Panc1 (cell line): ENCODE measurements at regions of chr17 and their contacts with region 1.

Region 1: GRCh38 chr17:78258323-78259191 is 27.1 kb downstream of the TMEM235 start:
- DNase-seq: no peak
- ATAC-seq: no peak; the same call in 1 of the 2 replicates
- H3K4me3 ChIP-seq: no peak overlapping the region
- H3K27ac ChIP-seq: peak overlapping the region; percentile 64
- H3K4me1 ChIP-seq: peaks cover 37% of the 10 kb centered on the region
- H3K27me3 ChIP-seq: no peaks in the 10 kb centered on the region
- CTCF ChIP-seq: no peak

Region 2: GRCh38 chr17:78154903-78155811 is 103.4 kb before region 1 on chr17:
- CTCF ChIA-PET with region 1: no interaction called
- POLR2A ChIA-PET with region 1: interaction called, 15 read pairs
- in situ Hi-C with region 1: no loop called
- intact Hi-C with region 1: no loop called
- DNase-seq: no peak
- ATAC-seq: no peak
- H3K4me3 ChIP-seq: no peak overlapping the region
- H3K27ac ChIP-seq: no peak overlapping the region
- H3K4me1 ChIP-seq: no peaks in the 10 kb centered on the region
- H3K27me3 ChIP-seq: no peaks in the 10 kb centered on the region
- CTCF ChIP-seq: no peak

Region 3: DNA sequence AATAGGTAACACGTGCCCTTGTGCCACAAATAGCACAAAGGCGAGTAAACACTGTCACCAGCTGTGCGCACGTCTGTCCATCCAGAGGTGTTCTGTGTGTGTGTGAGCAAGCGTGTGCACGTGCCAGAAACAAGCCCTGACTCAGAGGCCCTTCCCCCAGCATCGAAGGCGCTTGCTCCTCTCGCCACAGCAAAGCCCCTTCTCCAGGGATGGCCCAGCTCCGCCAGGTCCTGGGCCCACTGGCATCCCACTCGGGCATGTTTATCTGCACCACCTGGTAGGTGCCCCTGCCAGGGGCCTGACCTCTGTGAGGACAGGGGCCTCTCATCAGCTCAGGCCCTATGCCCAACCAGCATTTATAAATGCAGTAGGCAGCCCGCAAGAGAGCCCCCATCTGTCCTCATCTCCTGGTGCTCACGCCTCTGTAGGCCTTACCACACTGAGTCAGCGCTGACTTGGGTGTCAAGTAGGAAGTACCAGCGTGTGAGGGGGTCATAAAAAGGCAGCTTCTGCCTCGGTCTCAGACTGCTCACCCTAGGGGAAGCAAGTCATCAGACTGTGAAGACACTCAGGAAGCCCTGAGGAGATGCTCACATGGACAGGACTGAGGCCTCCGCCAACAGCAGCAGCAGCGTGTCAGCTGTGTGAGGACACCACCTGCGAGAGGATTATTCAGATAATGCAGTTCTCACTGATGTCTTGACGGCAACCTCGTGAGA is 16.4 kb before region 1 on chr17:
- CTCF ChIA-PET with region 1: no interaction called
- POLR2A ChIA-PET with region 1: no interaction called
- in situ Hi-C with region 1: no loop called
- intact Hi-C with region 1: no loop called
- DNase-seq: no peak
- ATAC-seq: no peak
- H3K4me3 ChIP-seq: no peak overlapping the region
- H3K27ac ChIP-seq: no peak overlapping the region
- H3K4me1 ChIP-seq: no peaks in the 10 kb centered on the region
- H3K27me3 ChIP-seq: no peaks in the 10 kb centered on the region
- CTCF ChIP-seq: no peak

Region 4: GRCh38 chr17:78337244-78338109 is 78.9 kb after region 1 on chr17:
- CTCF ChIA-PET with region 1: interaction called, 13 read pairs
- POLR2A ChIA-PET with region 1: no interaction called
- in situ Hi-C with region 1: no loop called
- intact Hi-C with region 1: no loop called
- DNase-seq: no peak
- ATAC-seq: no peak
- H3K4me3 ChIP-seq: no peak overlapping the region
- H3K27ac ChIP-seq: peak overlapping the region; percentile 52; the same call in 1 of the 2 replicates
- H3K4me1 ChIP-seq: peaks cover 54% of the 10 kb centered on the region
- H3K27me3 ChIP-seq: no peaks in the 10 kb centered on the region
- CTCF ChIP-seq: no peak

Region 5: GRCh38 chr17:78442648-78443128 is 184.1 kb after region 1 on chr17:
- CTCF ChIA-PET with region 1: no interaction called
- POLR2A ChIA-PET with region 1: interaction called, 17 read pairs
- in situ Hi-C with region 1: no loop called
- intact Hi-C with region 1: no loop called
- DNase-seq: no peak
- ATAC-seq: no peak
- H3K4me3 ChIP-seq: no peak overlapping the region
- H3K27ac ChIP-seq: no peak overlapping the region
- H3K4me1 ChIP-seq: no peaks in the 10 kb centered on the region
- H3K27me3 ChIP-seq: no peaks in the 10 kb centered on the region
- CTCF ChIP-seq: no peak